Dorsolateral prefrontal cortex (tissue), 120 donors: ENCODE measurements at regions of chr4 and their contacts with region 1.

Region 1: GRCh38 chr4:118034053-118034785 is at the start of gene NDST3:
- DNase-seq: peak; percentile 43 to 86 (median 82)
- H3K4me3 ChIP-seq: peak within 1 kb of the TSS; percentile 50 to 87 (median 71)
- H3K27ac ChIP-seq: peak within 1 kb of the TSS in 56 of 59 donors; percentile 23 to 92 (median 79)
- H3K27me3 ChIP-seq: peaks cover 0 to 13% (median 0%) of the 10 kb centered on the region in 45 donors
- CTCF ChIP-seq: peak in 55 of 56 donors; percentile 36 to 79 (median 62)
- total RNA-seq, gene NDST3: 5.4 to 45.3 (median 23.4) TPM

Region 2: DNA sequence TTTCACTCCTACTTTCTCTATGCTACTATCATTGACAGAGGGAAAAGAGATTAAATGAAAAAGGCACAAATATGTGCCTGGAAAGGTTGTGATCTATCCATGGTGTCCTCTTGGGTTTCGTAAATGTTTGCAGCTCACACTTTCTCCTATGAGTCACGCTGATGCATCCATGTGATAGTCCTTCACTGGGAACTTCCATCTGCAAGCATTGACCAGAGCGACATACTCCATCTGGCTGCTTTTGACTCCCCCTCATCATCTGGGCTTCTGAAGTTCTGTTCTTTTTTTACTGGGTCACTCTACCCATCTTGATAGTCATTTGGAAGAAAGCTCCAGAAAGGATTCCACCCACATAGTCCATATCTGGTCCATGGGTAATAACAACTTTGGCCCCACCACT is 84.6 kb before region 1 on chr4:
- intact Hi-C with region 1: no loop called
- DNase-seq: peak in 1 of 10 donors; percentile 17
- H3K4me3 ChIP-seq: no peak overlapping the region
- H3K27ac ChIP-seq: no peak overlapping the region
- H3K27me3 ChIP-seq: no peaks in the 10 kb centered on the region
- CTCF ChIP-seq: no peak

Region 3: GRCh38 chr4:118224239-118224829 is 190.1 kb after region 1 on chr4:
- intact Hi-C with region 1: loop called (anchors 10 kb)
- DNase-seq: peak in 1 of 10 donors; percentile 4
- H3K4me3 ChIP-seq: no peak overlapping the region
- H3K27ac ChIP-seq: no peak overlapping the region
- H3K27me3 ChIP-seq: no peaks in the 10 kb centered on the region
- CTCF ChIP-seq: peak; percentile 58 to 88 (median 76)